ENCODE measurements at regions of chr14 and their contacts with region 1.

Region 1: GRCh38 chr14:20343092-20343861 is at the start of gene PARP2:
- DNase-seq: peak; percentile 91
- ATAC-seq: peak; percentile 94
- H3K4me3 Mint-ChIP-seq: peak within 1 kb of the TSS; percentile 100
- H3K27ac Mint-ChIP-seq: peak within 1 kb of the TSS; percentile 99
- H3K4me1 Mint-ChIP-seq: peaks cover 13% of the 10 kb centered on the region
- H3K27me3 Mint-ChIP-seq: peaks cover 3% of the 10 kb centered on the region
- total RNA-seq, gene PARP2: 28.3 to 32.7 TPM

Region 2: DNA sequence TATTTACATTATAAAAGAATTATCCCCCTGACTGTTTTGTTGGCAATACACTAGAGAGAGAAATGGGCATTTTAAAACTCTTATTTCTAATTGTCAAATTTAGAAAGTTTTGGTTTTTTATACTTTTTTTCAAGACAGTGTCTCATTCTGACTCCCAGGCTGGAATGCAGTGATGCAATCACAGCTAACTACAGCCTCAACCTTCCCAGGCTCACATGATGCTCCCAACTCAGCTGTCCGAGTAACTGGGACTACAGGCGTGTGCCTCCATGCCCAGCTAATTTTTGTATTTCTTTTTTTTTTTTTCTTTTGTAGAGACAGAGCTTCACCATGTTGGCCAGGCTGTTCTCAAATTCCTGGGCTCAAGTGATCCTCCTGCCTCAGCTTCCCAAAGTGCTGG is 128.1 kb before region 1 on chr14:
- POLR2A ChIA-PET with region 1: no interaction called
- DNase-seq: no peak
- ATAC-seq: no peak
- H3K4me3 Mint-ChIP-seq: no peak overlapping the region
- H3K27ac Mint-ChIP-seq: no peak overlapping the region
- H3K4me1 Mint-ChIP-seq: no peaks in the 10 kb centered on the region
- H3K27me3 Mint-ChIP-seq: peaks cover 2% of the 10 kb centered on the region

Region 3: DNA sequence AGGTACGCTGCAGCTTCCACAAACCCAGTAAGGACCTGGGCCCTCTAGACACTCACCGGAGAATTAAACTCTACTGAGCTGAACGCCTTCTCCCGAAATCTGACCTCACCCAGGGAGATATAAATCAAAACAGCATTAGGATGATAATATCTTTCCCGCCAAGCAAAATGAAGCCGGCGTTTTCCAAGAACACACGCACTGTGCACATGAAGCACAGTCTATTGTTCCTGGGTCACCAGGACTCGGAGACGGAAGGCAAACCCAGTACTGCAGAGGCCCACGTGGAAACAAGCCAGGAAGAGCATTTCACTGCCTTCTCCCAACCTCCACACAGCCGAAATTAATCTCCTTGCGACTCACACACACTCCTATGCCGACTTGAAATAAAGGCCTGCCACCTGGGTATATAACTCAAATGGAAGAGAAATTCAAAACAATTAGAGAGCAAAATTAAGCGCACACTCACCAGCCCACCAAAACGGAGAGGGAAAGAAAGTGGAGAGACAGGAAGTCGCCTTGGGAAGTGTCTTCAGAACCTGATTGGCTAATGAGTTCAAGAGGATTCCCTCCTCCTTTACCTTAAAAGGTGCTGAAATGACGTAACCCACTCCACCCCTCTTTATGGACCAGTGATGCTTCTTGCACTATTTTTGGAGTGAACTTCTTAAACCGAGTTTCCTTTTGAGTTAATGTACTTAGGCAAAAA is 10.3 kb before region 1 on chr14 and contains the start of gene CCNB1IP1:
- POLR2A ChIA-PET with region 1: interaction called, 43 read pairs
- DNase-seq: peak; percentile 39
- ATAC-seq: peak; percentile 97
- H3K4me3 Mint-ChIP-seq: peak within 1 kb of the TSS; percentile 99
- H3K27ac Mint-ChIP-seq: peak within 1 kb of the TSS; percentile 87
- H3K4me1 Mint-ChIP-seq: peaks cover 32% of the 10 kb centered on the region
- H3K27me3 Mint-ChIP-seq: no peaks in the 10 kb centered on the region
- total RNA-seq, gene CCNB1IP1: 35.0 to 39.5 TPM

Region 4: GRCh38 chr14:20454516-20455354 is 111.5 kb after region 1 on chr14 and contains the starts of genes APEX1 and OSGEP:
- POLR2A ChIA-PET with region 1: interaction called, 18 read pairs
- DNase-seq: peak; percentile 90
- ATAC-seq: peak; percentile 90
- H3K4me3 Mint-ChIP-seq: peak within 1 kb of the TSS; percentile 41
- H3K27ac Mint-ChIP-seq: no peak within 1 kb of the TSS
- H3K4me1 Mint-ChIP-seq: peaks cover 19% of the 10 kb centered on the region
- H3K27me3 Mint-ChIP-seq: no peaks in the 10 kb centered on the region
- total RNA-seq, gene APEX1: 118 to 123 TPM
- total RNA-seq, gene OSGEP: 63.5 to 65.3 TPM

Region 5: DNA sequence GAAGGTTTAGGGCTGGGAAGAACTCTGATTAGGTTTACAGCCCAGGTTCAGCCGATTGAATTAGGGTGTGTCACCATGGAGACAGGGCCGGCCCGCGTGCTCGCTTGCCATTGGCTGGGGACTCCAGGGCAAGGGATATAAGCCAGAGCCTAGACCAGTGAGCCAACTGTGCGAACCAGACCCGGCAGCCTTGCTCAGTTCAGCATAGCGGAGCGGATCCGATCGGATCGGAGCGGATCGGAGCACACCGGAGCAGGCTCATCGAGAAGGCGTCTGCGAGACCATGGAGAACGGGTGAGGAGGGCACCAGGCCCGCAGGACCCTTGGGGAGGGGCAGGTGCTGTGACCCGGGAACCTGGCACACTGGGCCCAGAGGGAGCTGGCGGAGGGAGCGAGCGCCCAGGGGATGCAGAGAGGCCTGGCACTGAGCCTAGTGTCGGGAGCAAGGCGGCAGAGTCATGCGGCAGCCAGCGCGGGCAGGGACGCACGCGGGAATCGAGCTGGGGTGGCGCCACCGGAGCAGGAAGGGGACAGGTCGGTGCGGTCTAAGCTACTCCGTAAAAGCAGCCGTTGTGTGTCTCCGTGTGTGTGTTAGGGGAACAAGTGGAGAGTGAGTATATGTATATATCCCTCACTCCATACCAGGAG is 126.1 kb after region 1 on chr14 and contains the start of gene PNP:
- POLR2A ChIA-PET with region 1: interaction called, 32 read pairs
- DNase-seq: peak; percentile 86
- ATAC-seq: peak; percentile 94
- H3K4me3 Mint-ChIP-seq: peak within 1 kb of the TSS; percentile 99
- H3K27ac Mint-ChIP-seq: peak within 1 kb of the TSS; percentile 99
- H3K4me1 Mint-ChIP-seq: peaks cover 42% of the 10 kb centered on the region
- H3K27me3 Mint-ChIP-seq: no peaks in the 10 kb centered on the region
- total RNA-seq, gene PNP: 135 to 141 TPM

Region 6: DNA sequence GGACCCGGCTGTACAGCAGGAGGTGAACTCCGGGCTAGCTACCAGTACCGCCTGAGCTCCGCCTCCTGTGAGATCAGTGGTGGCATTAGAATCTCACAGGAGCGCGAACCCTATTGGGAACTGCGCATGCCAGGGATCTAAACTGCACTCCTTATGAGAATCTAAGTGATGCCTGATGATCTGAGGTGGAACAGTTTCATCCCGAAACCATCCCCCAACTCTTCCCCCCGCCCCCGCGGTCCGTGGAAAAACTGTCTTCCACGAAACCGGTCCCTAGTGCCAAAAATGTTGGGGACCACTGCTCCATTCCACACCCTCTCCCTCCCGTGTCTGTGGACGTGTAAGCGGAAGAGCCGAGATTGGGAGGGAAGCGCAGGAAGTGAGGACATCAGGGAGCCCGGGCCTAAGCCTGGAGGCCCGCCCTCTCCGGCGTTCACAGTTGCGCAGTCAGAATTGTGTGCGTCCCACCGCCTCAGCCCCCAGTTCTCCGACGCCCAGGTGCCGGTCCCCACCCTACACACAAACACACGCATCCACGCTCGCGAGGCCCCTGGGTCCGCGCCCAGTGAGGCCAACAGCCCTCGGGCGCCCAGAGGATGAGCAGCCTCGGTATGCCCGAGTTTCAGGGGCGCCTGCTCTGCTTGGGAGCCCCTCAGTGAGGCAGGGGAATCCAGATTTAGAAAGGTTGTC is 339.3 kb after region 1 on chr14:
- POLR2A ChIA-PET with region 1: interaction called, 16 read pairs
- DNase-seq: peak; percentile 79
- ATAC-seq: peak; percentile 63
- H3K4me3 Mint-ChIP-seq: no peak overlapping the region
- H3K27ac Mint-ChIP-seq: no peak overlapping the region
- H3K4me1 Mint-ChIP-seq: peaks cover 30% of the 10 kb centered on the region
- H3K27me3 Mint-ChIP-seq: peaks cover 4% of the 10 kb centered on the region

Measured in activated naive CD8-positive, alpha-beta T cell treated with anti-CD3 and anti-CD28 coated beads, Interleukin-2, amount 10 ng/mL, durations not matched to agents 7 days and 5 days (primary cell).